ENCODE measurements at regions of chr1 and their contacts with region 1.

Region 1: GRCh38 chr1:76450229-76450628 is 375.7 kb downstream of the ST6GALNAC3 start:
- DNase-seq: no peak

Region 2: DNA sequence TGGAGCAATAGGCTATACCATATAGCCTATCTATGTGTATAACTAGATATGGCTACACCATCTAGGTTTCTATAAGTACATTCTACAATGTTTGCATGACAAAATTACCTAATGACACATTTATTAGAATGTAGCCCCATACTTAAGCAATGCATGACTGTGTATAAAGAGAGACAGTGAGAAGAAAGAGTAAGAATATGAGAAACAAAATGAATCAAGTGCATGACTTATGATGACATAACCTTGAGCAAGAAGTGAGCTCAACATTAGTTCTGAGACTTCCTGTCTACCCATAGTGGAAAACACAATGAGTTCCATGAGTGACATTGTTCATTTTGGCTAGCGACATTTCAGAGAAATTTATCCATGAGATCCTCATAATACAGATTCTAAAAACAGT is 849.4 kb before region 1 on chr1:
- intact Hi-C with region 1: loop called in 1 of 2 experiments (anchors 5 kb)
- DNase-seq: no peak

Region 3: DNA sequence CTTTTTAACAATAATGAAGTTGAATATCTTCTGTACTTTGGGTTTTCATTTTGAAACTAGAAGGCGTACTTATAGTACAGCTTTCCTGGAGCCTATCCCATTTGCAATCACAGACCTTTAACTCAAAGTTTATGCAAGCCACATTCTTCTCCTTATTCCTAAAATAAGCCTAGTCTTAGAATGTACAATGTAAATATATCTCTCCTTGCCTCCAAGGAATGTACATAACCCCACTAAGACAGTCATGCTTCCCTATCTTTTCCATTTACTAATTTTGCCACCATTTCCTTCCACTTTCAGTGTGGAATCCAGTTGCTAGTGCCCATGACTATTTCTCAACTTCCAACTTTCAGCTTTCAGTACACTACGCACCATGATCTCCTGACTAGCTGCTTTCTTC is 48.1 kb before region 1 on chr1:
- intact Hi-C with region 1: no loop called
- DNase-seq: no peak

Region 4: DNA sequence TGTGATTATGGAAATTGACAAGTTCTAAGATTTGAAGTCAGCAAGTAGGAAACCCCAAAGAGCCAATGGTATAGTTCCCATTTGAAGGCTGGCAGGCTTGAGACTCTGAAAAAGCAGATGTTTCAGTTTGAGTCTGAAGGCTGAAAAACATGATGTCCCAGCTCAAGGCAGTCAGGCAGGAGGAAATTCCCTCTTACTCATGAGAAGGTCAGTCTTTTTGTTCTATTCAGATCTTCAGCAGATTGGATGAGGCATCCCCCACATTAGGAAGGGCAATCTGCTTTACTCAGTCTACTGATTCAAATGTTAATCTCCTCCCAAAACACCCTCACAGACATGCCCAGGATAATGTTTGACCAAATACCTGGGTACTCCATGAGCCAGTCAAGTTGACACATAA is 44.6 kb after region 1 on chr1:
- intact Hi-C with region 1: no loop called
- DNase-seq: no peak

Measured in posterior vena cava (tissue), 2 donors.